HepG2 (cell line): ENCODE measurements at regions of chr19 and their contacts with region 1.

Region 1: GRCh38 chr19:48970923-48971395 is 5.8 kb downstream of the FTL start:
- DNase-seq: peak; percentile 57
- ATAC-seq: peak; percentile 16
- H3K4me3 ChIP-seq: no peak overlapping the region
- H3K27ac ChIP-seq: no peak overlapping the region
- H3K4me1 ChIP-seq: peaks cover 17% of the 10 kb centered on the region
- H3K27me3 ChIP-seq: no peaks in the 10 kb centered on the region; a peak in 1 of 5 replicates
- CTCF ChIP-seq: peak; percentile 95
- EP300 ChIP-seq: no peak
- POLR2A ChIP-seq: no peak
- RAD21 ChIP-seq: peak; percentile 90

Region 2: GRCh38 chr19:47066376-47067214 is 1904.4 kb before region 1 on chr19:
- CTCF ChIA-PET with region 1: no interaction called
- POLR2A ChIA-PET with region 1: no interaction called
- in situ Hi-C with region 1: no loop called
- intact Hi-C with region 1: no loop called
- DNase-seq: no peak
- ATAC-seq: no peak
- H3K4me3 ChIP-seq: no peak overlapping the region
- H3K27ac ChIP-seq: no peak overlapping the region
- H3K4me1 ChIP-seq: no peaks in the 10 kb centered on the region
- H3K27me3 ChIP-seq: no peaks in the 10 kb centered on the region
- CTCF ChIP-seq: no peak
- EP300 ChIP-seq: no peak
- POLR2A ChIP-seq: no peak
- RAD21 ChIP-seq: no peak

Region 3: DNA sequence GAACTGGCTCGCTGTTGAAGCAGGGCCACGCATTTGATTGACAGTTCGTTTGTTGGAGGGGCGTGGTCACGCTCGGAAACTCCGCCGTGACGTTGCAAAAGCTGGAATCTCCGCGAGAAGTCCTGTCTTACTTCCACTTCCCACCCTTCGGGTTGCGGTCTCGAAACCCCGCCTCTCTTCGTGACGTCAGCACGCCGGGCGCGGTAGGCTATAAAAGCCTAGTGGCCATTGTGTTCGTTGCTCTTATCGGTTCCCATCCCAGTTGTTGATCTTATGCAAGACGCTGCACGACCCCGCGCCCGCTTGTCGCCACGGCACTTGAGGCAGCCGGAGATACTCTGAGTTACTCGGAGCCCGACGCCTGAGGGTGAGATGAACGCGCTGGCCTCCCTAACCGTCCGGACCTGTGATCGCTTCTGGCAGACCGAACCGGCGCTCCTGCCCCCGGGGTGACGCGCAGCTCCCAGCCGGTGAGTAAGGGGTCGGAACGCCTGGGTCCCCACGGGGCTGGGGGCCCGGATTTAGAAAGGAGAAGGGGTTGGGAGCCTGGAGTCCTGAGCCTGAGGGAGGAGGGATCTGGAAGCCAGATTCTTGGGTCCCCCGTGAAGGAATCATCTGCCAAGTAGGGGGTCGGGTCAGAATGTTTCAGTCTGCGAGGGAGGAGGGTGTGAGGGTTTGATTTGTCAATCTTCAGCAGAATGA is 98.6 kb before region 1 on chr19 and contains the start of gene PPP1R15A:
- CTCF ChIA-PET with region 1: no interaction called
- POLR2A ChIA-PET with region 1: interaction called, 88 read pairs
- in situ Hi-C with region 1: no loop called
- intact Hi-C with region 1: loop called (anchors 10 kb)
- DNase-seq: peak; percentile 95
- ATAC-seq: peak; percentile 50
- H3K4me3 ChIP-seq: peak within 1 kb of the TSS; percentile 93 to 97 (median 94)
- H3K27ac ChIP-seq: peak within 1 kb of the TSS; percentile 99
- H3K4me1 ChIP-seq: peaks cover 50% of the 10 kb centered on the region
- H3K27me3 ChIP-seq: no peaks in the 10 kb centered on the region; a peak in 1 of 5 replicates
- CTCF ChIP-seq: 0 out of 2 replicates have a peak, but pooled peaks have one; percentile 3
- EP300 ChIP-seq: no peak; a peak in 1 of 4 replicates
- POLR2A ChIP-seq: peak; percentile 99
- RAD21 ChIP-seq: no peak
- total RNA-seq, gene PPP1R15A: 7.8 and 18.5 TPM in 2 replicates

Region 4: DNA sequence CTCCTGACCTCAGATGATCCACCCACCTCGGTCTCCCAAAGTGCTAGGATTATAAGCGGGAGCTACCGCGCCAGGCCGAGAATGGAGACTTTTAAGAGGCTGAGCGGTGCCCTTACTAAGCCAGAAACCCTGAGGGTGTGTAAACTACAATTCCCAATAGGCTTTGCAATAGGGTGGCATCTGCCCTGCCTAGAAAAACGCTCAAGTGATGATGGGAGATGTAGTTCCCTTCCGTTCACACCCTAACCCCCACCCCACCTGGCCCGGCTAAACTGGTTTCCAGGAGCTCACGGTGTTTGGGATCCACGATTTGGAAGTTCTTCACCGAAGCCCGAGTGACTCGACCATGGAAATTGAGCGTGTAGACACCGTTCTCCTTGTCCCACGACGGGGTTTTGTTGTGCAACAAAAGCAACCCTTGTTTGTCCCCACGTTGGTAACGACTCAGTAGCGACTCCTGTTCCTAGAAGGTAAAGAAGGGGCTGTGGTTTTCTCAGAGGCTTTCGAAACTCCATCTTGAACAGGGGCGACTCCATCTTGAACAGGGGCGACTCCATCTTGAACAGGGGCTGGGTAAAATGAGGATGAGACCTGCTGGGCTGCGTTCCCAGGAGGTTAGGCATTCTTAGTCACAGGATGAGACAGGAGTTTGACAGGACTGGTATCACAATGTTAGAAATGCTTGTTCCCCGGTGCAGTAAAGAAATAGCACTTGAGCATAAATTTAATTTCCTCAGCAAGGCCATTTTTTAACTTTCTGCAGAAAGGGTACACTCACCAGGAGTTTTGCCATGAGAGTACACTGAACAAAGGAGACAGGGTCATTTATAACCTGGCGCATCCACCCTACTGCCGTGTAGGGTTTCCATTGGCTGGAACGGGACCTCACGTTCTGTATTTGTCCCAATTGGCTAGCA is 89.0 kb before region 1 on chr19:
- CTCF ChIA-PET with region 1: no interaction called
- POLR2A ChIA-PET with region 1: interaction called, 88 read pairs
- in situ Hi-C with region 1: no loop called
- intact Hi-C with region 1: loop called (anchors 10 kb)
- DNase-seq: no peak
- ATAC-seq: peak; percentile 64
- H3K4me3 ChIP-seq: no peak overlapping the region
- H3K27ac ChIP-seq: no peak overlapping the region
- H3K4me1 ChIP-seq: peaks cover 13% of the 10 kb centered on the region
- H3K27me3 ChIP-seq: no peaks in the 10 kb centered on the region; a peak in 1 of 5 replicates
- CTCF ChIP-seq: no peak
- EP300 ChIP-seq: no peak
- POLR2A ChIP-seq: peak in 1 of 2 experiments; percentile 22; a peak in 1 of 4 replicates
- RAD21 ChIP-seq: no peak

Region 5: DNA sequence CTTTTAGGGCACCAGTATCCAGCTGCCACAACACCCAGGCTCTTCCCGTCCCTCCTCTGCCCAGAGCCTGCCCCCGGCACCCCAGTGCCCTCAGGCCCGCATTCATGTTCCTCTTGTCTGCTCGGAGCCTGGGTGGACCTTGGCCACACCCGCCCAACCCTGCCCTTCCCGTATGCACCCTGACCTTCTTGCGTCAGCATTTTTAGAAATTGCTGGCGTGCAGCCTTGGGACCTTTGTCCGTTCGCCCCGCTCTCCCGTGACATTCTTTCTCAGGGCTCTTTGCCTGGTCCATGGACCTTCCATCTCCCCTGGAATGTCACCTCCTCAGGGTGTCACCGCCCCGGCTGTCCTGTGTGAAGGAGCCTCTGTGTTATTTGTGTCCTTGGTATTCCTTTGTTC is 63.3 kb before region 1 on chr19:
- CTCF ChIA-PET with region 1: no interaction called
- POLR2A ChIA-PET with region 1: interaction called, 3 read pairs
- in situ Hi-C with region 1: no loop called
- intact Hi-C with region 1: loop called (anchors 1 kb)
- DNase-seq: peak; percentile 83
- ATAC-seq: peak; percentile 93
- H3K4me3 ChIP-seq: peak overlapping the region in 1 of 3 experiments; percentile 33; a peak in 2 of 6 replicates
- H3K27ac ChIP-seq: peak overlapping the region; percentile 77
- H3K4me1 ChIP-seq: peaks cover 22% of the 10 kb centered on the region
- H3K27me3 ChIP-seq: no peaks in the 10 kb centered on the region
- CTCF ChIP-seq: no peak
- EP300 ChIP-seq: peak; percentile 32 to 79
- POLR2A ChIP-seq: no peak
- RAD21 ChIP-seq: no peak

Region 6: GRCh38 chr19:48933382-48933932 is 37.5 kb before region 1 on chr19 and contains the start of gene DHDH:
- CTCF ChIA-PET with region 1: interaction called, 8 read pairs
- POLR2A ChIA-PET with region 1: interaction called, 20 read pairs
- in situ Hi-C with region 1: no loop called
- intact Hi-C with region 1: loop called (anchors 2 kb)
- DNase-seq: peak; percentile 74
- ATAC-seq: peak; percentile 90
- H3K4me3 ChIP-seq: peak within 1 kb of the TSS; percentile 36 to 71 (median 51)
- H3K27ac ChIP-seq: no peak within 1 kb of the TSS
- H3K4me1 ChIP-seq: peaks cover 31% of the 10 kb centered on the region
- H3K27me3 ChIP-seq: peaks cover 0 to 1% of the 10 kb centered on the region in 2 experiments; a peak in 1 of 5 replicates
- CTCF ChIP-seq: no peak
- EP300 ChIP-seq: no peak
- POLR2A ChIP-seq: peak in 1 of 2 experiments; percentile 72; a peak in 2 of 4 replicates
- RAD21 ChIP-seq: no peak
- total RNA-seq, gene DHDH: 0.13 and 0.29 TPM in 2 replicates

Region 7: GRCh38 chr19:48954595-48955310 is 16.2 kb before region 1 on chr19 and contains the start of gene BAX:
- CTCF ChIA-PET with region 1: no interaction called
- POLR2A ChIA-PET with region 1: interaction called, 153 read pairs
- in situ Hi-C with region 1: no loop called
- intact Hi-C with region 1: no loop called
- DNase-seq: peak; percentile 96
- ATAC-seq: peak; percentile 81
- H3K4me3 ChIP-seq: peak within 1 kb of the TSS; percentile 76 to 84 (median 81)
- H3K27ac ChIP-seq: peak within 1 kb of the TSS; percentile 82
- H3K4me1 ChIP-seq: peaks cover 85% of the 10 kb centered on the region
- H3K27me3 ChIP-seq: no peaks in the 10 kb centered on the region
- CTCF ChIP-seq: peak; percentile 47
- EP300 ChIP-seq: peak in 1 of 2 experiments; percentile 25; a peak in 1 of 4 replicates
- POLR2A ChIP-seq: peak in 1 of 2 experiments; percentile 69; a peak in 3 of 4 replicates
- RAD21 ChIP-seq: peak; percentile 71
- total RNA-seq, gene BAX: 167 and 176 TPM in 2 replicates